ENCODE measurements at regions of chr2 and their contacts with region 1.

Region 1: DNA sequence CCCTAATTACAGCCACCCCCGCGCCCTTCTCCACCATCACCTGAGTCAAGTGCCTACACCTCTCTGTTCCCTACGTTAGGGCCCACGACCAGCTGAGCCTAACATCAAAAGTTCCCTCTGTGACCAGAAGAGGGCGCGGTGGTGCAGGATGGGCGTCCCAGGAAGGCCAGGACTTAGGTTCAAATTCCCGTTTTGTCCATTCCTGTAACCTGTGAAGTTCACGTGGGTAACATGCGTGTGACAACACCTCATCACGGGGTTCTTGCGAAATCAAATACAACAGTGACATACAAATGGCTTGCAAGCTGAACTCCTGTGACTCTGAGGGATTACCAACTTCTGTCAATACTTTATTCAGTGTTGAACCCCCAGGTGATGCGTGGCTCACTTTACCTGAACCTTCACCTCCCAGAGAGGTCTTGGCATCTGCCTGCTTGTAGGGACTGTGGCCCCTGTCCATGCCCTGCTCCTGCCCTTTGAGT is 207.9 kb downstream of the ARL4C start:
- DNase-seq: peak; percentile 87
- H3K4me3 Mint-ChIP-seq: peak overlapping the region; percentile 49
- H3K27ac Mint-ChIP-seq: peak overlapping the region; percentile 95
- H3K4me1 Mint-ChIP-seq: peaks cover 65% of the 10 kb centered on the region
- H3K27me3 Mint-ChIP-seq: no peaks in the 10 kb centered on the region

Region 2: DNA sequence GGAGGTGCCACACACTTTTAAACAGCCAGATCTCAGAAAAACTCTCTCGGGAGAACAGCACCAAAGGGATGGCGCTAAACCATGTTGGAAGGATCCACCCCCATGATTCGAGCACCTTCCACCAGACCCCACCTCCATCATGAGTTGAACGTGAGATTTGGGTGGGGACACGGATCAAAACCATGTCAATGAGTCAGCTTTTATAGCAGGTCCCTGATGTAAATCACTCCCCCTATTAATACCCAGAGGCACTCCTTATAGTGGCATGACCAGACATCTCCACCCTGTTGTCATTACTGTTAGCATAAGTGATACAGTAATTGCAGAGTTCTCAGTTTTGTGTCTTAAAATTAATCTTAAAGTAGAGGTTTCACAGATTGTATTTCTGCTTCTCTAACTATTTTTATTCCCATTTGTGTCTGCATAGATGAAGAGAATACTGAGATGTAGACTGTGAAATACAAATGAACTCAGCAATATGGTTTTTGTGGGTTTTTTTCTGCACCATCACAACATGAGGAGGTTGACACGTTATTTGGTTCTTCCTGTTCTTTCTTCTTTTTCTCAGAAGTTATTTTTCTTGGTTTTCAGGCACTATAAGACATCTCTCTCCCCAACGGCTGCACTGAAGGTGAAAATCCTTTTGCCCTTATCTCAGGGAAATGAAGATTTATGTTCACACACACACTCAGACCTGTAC is 10.3 kb before region 1 on chr2:
- CTCF ChIA-PET with region 1: interaction called, 25 read pairs
- POLR2A ChIA-PET with region 1: interaction called, 5 read pairs
- intact Hi-C with region 1: loop called (anchors 1 kb)
- DNase-seq: peak; percentile 31
- H3K4me3 Mint-ChIP-seq: peak overlapping the region; percentile 13
- H3K27ac Mint-ChIP-seq: peak overlapping the region; percentile 82
- H3K4me1 Mint-ChIP-seq: peaks cover 47% of the 10 kb centered on the region
- H3K27me3 Mint-ChIP-seq: no peaks in the 10 kb centered on the region

Region 3: DNA sequence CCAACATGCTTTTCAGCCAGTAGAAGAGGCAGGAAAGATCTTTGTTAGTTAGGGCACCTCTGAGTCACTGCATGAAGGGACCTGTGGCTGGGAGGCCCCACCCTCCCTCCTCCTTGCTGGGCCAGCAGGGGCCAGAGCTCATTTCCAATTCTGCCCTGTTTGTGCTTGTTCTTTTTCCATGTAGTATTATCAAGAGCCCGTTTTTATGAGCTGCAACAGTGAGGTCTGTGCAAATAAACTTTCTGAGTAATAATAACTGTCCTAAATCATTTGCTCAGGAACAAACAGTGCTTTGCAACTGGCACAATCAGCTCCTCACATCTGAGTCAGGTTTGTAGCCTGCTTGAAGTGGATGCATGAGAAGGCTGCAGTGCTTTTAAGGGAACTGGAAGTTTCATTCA is 79.8 kb after region 1 on chr2:
- CTCF ChIA-PET with region 1: interaction called, 18 read pairs
- POLR2A ChIA-PET with region 1: no interaction called
- intact Hi-C with region 1: loop called (anchors 2 kb)
- DNase-seq: peak; percentile 67
- H3K4me3 Mint-ChIP-seq: no peak overlapping the region
- H3K27ac Mint-ChIP-seq: peak overlapping the region; percentile 49
- H3K4me1 Mint-ChIP-seq: peaks cover 67% of the 10 kb centered on the region
- H3K27me3 Mint-ChIP-seq: no peaks in the 10 kb centered on the region

Region 4: DNA sequence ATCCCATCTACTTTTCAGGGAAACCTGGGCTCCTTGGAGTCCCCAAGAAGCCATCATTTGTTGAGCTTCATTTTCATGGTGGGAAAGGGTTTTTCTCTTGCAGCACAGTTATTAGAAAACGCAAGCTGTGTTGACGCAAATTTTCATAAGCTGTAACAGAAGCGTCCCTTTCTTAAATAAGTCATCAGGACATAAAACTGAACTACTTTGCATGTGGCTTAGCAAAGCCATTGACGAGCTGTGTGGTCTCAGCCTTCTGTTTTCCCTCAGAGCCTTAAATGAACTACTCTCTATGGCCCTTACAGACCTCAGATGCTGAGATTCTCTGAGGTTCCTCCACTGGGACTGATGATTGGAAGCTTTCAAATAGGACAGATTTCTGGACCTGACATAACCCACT is 122.8 kb after region 1 on chr2:
- CTCF ChIA-PET with region 1: no interaction called
- POLR2A ChIA-PET with region 1: no interaction called
- intact Hi-C with region 1: no loop called
- DNase-seq: no peak
- H3K4me3 Mint-ChIP-seq: no peak overlapping the region
- H3K27ac Mint-ChIP-seq: no peak overlapping the region
- H3K4me1 Mint-ChIP-seq: peaks cover 30% of the 10 kb centered on the region
- H3K27me3 Mint-ChIP-seq: no peaks in the 10 kb centered on the region

Region 5: GRCh38 chr2:234451852-234452625 is 163.0 kb after region 1 on chr2:
- CTCF ChIA-PET with region 1: interaction called, 8 read pairs
- POLR2A ChIA-PET with region 1: interaction called, 12 read pairs
- intact Hi-C with region 1: no loop called
- DNase-seq: no peak
- H3K4me3 Mint-ChIP-seq: peak overlapping the region; percentile 72
- H3K27ac Mint-ChIP-seq: peak overlapping the region; percentile 88
- H3K4me1 Mint-ChIP-seq: peaks cover 78% of the 10 kb centered on the region
- H3K27me3 Mint-ChIP-seq: no peaks in the 10 kb centered on the region

Region 6: GRCh38 chr2:234488913-234489451 is 200.0 kb after region 1 on chr2:
- CTCF ChIA-PET with region 1: interaction called, 10 read pairs
- POLR2A ChIA-PET with region 1: interaction called, 93 read pairs
- intact Hi-C with region 1: loop called (anchors 1 kb)
- DNase-seq: peak; percentile 85
- H3K4me3 Mint-ChIP-seq: peak overlapping the region; percentile 77
- H3K27ac Mint-ChIP-seq: peak overlapping the region; percentile 97
- H3K4me1 Mint-ChIP-seq: peaks cover 89% of the 10 kb centered on the region
- H3K27me3 Mint-ChIP-seq: no peaks in the 10 kb centered on the region

Measured in activated CD4-positive, alpha-beta memory T cell treated with anti-CD3 and anti-CD28 coated beads for 36 hours (primary cell).